Activated T-helper 2 cell treated with anti-CD3 and anti-CD28 coated beads, Interferon-gamma antibody, Interleukin-2, Interleukin-4, amounts not matched to agents 10 μg/mL and 5 μg/mL and 100 μg/mL, durations not matched to agents 14 hours and 24 hours and 36 hours (primary cell): ENCODE measurements at regions of chr16 and their contacts with region 1.

Region 1: GRCh38 chr16:25066747-25067631 is 44.6 kb upstream of the LCMT1 start:
- DNase-seq: peak; percentile 77
- H3K4me3 Mint-ChIP-seq: peak overlapping the region; percentile 90
- H3K27ac Mint-ChIP-seq: peak overlapping the region; percentile 89
- H3K4me1 Mint-ChIP-seq: peaks cover 37% of the 10 kb centered on the region
- H3K27me3 Mint-ChIP-seq: peaks cover 3% of the 10 kb centered on the region

Region 2: GRCh38 chr16:25093208-25094061 is 26.4 kb after region 1 on chr16:
- intact Hi-C with region 1: loop called (anchors 2 kb)
- DNase-seq: peak; percentile 21
- H3K4me3 Mint-ChIP-seq: peak overlapping the region; percentile 28
- H3K27ac Mint-ChIP-seq: peak overlapping the region; percentile 85
- H3K4me1 Mint-ChIP-seq: peaks cover 28% of the 10 kb centered on the region
- H3K27me3 Mint-ChIP-seq: peaks cover 2% of the 10 kb centered on the region

Region 3: DNA sequence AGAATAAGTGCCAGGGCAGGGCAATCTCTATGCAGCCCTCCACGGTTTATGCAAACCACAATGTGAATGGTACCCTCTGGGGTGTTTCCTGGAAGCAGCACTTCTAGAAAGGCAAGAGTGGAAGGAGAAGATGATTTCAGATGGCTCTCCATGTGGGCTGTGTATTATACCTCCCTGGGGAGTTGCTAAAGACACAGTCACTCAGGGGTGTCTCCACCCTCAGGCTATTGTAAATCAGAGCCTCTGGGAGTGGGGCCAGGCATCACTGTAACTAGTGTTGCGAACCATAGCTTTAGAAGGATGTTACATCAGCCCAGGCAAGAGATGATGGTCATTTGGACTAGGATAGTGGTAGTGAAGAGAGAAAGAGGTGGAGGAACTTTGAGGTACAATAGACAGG is 274.0 kb after region 1 on chr16:
- intact Hi-C with region 1: no loop called
- DNase-seq: no peak
- H3K4me3 Mint-ChIP-seq: no peak overlapping the region
- H3K27ac Mint-ChIP-seq: no peak overlapping the region
- H3K4me1 Mint-ChIP-seq: no peaks in the 10 kb centered on the region
- H3K27me3 Mint-ChIP-seq: no peaks in the 10 kb centered on the region